ENCODE measurements at regions of chrX and their contacts with region 1.

Region 1: GRCh38 chrX:79412972-79413371 is 45.8 kb upstream of the ITM2A start:
- DNase-seq: no peak
- H3K4me3 Mint-ChIP-seq: peak overlapping the region; percentile 66
- H3K27ac Mint-ChIP-seq: peak overlapping the region; percentile 69
- H3K4me1 Mint-ChIP-seq: peaks cover 21% of the 10 kb centered on the region
- H3K27me3 Mint-ChIP-seq: no peaks in the 10 kb centered on the region

Region 2: DNA sequence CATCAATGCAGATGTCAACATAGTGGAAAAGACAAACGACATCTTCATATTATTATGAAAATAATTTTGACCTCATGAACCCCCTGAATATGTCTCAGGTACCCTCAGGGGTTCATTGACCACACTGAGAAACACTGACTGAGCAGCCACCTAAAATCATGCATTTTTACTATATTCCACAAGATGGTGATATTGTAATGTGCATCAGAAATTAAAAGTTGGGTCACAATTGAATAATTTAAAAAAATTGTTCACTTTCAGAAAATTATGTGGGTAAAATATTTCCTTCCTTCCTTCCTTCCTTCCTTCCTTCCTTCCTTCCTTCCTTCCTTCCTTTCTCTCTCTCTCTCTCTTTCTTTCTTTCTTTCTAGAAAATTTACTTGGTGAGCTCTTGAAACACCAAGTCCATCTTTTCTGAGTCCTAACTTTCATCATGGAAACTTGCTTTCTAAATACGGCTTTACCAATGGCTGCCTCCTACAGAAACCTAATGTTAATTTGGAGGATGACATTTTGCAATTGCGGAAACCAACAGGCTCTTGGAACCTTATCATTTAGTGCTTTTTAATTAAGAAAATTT is 857.5 kb before region 1 on chrX:
- CTCF ChIA-PET with region 1: no interaction called
- intact Hi-C with region 1: loop called (anchors 1 kb)
- DNase-seq: no peak
- H3K4me3 Mint-ChIP-seq: no peak overlapping the region
- H3K27ac Mint-ChIP-seq: no peak overlapping the region
- H3K4me1 Mint-ChIP-seq: peaks cover 2% of the 10 kb centered on the region
- H3K27me3 Mint-ChIP-seq: no peaks in the 10 kb centered on the region

Region 3: GRCh38 chrX:78886550-78886949 is 526.4 kb before region 1 on chrX:
- CTCF ChIA-PET with region 1: no interaction called
- intact Hi-C with region 1: loop called (anchors 10 kb)
- DNase-seq: no peak
- H3K4me3 Mint-ChIP-seq: no peak overlapping the region
- H3K27ac Mint-ChIP-seq: no peak overlapping the region
- H3K4me1 Mint-ChIP-seq: peaks cover 9% of the 10 kb centered on the region
- H3K27me3 Mint-ChIP-seq: no peaks in the 10 kb centered on the region

Region 4: DNA sequence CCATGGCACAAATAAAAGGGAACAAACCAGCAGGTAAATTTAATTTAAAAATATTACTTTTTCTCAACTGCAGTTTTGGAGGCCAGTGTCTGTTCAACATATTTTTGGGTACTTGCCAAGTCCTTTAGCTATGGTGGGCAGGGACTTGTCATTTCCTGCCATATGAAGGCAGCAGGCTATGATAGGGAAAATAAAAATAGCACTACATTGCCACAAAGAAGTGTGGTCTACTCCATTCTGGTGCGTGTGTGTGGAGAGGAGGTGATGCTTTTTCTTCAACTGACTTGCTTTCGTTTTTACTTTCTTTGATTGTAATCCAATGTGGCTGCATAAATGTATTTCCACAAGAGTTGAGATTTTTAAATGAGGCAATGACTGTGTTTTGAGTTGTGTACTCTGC is 251.3 kb before region 1 on chrX:
- CTCF ChIA-PET with region 1: no interaction called
- intact Hi-C with region 1: loop called (anchors 5 kb)
- DNase-seq: peak; percentile 51
- H3K4me3 Mint-ChIP-seq: peak overlapping the region; percentile 81
- H3K27ac Mint-ChIP-seq: peak overlapping the region; percentile 98
- H3K4me1 Mint-ChIP-seq: peaks cover 55% of the 10 kb centered on the region
- H3K27me3 Mint-ChIP-seq: no peaks in the 10 kb centered on the region

Region 5: DNA sequence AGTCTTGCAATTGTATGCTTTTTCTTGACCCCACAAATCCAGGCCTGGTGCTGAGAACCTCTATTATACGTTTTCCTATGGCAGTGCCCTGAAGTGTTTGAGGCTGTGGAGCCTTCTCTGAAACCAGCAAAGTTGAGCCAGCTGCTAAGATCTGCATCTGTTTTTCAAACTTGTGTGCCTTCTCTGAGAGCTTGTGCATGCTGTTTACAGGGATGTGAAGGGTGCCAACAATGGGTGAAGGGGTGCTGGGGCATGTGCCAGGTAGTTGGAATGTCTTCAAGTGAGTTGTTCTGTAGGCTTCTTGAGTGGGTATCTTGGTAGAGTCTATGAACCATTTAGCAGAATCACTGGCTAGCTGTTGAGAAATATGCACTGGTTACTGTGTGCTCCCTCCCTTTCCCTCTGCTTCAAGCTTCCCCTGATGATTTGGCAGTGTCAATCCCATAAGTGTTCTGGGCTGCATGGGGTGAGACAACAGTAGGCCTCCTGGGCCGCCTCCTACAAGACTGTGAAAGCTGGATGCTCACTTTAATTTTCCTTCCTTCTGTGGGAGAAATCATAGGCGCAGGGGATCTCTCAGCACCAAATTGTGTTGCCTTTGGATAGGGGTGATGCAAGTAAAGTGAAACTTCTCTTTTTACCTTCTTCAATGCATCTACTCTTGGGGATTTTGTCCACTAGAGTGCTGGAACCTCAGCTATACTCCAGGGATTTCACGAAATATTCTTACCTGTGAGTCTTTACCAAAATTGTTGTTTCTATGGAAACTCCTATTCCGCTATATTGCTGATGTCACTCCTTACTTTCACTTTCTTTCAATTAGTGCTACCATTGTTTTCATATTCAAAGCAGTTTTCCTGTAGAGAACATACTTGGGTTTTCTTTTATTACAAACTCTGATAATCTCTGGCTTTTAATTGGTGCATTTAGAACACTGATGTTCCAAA is 75.8 kb before region 1 on chrX:
- CTCF ChIA-PET with region 1: no interaction called
- intact Hi-C with region 1: loop called (anchors 2 kb)
- DNase-seq: no peak
- H3K4me3 Mint-ChIP-seq: peak overlapping the region; percentile 65
- H3K27ac Mint-ChIP-seq: peak overlapping the region; percentile 74
- H3K4me1 Mint-ChIP-seq: peaks cover 29% of the 10 kb centered on the region
- H3K27me3 Mint-ChIP-seq: no peaks in the 10 kb centered on the region

Region 6: GRCh38 chrX:79440336-79440735 is 27.4 kb after region 1 on chrX:
- CTCF ChIA-PET with region 1: no interaction called
- intact Hi-C with region 1: no loop called
- DNase-seq: no peak
- H3K4me3 Mint-ChIP-seq: no peak overlapping the region
- H3K27ac Mint-ChIP-seq: no peak overlapping the region
- H3K4me1 Mint-ChIP-seq: no peaks in the 10 kb centered on the region
- H3K27me3 Mint-ChIP-seq: no peaks in the 10 kb centered on the region

Region 7: DNA sequence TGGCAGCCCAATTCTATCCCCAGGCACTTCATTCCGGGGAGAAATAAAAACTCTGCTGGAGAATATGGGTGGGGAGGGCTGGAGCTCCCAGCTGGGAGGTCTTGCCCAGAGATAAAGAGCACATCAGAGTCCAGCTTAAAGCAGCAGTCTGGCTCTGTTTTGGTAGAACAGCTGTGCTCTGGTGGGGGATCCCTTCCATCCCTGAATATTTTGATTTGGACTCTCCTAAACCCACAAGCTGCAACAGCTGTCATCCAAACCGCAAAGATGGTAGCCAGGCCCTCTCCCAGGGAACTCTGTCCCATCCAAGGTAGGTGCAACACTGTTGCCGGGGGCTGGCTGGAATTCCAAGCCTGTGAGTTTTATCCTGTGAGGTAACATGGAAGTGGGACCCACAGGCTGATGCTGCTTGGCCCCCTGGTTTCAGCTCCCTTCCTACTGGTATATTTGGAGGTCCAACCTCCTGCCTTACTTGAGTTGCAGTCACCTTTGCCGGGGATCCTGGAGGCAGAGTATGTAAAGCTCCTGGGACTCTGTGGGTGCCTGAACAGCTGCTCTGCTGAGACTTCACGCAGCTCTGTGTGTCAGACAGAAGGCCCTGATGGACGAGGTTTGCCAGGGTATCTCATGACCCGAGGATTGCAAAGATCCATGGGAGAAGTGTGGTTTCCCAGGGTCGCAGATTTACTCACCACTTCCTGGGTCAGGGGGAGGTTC is 157.7 kb after region 1 on chrX:
- CTCF ChIA-PET with region 1: no interaction called
- intact Hi-C with region 1: no loop called
- DNase-seq: no peak
- H3K4me3 Mint-ChIP-seq: no peak overlapping the region
- H3K27ac Mint-ChIP-seq: no peak overlapping the region
- H3K4me1 Mint-ChIP-seq: no peaks in the 10 kb centered on the region
- H3K27me3 Mint-ChIP-seq: peaks cover 6% of the 10 kb centered on the region